CD8-positive, alpha-beta T cell (primary cell): ENCODE measurements at regions of chr7 and their contacts with region 1.

Region 1: DNA sequence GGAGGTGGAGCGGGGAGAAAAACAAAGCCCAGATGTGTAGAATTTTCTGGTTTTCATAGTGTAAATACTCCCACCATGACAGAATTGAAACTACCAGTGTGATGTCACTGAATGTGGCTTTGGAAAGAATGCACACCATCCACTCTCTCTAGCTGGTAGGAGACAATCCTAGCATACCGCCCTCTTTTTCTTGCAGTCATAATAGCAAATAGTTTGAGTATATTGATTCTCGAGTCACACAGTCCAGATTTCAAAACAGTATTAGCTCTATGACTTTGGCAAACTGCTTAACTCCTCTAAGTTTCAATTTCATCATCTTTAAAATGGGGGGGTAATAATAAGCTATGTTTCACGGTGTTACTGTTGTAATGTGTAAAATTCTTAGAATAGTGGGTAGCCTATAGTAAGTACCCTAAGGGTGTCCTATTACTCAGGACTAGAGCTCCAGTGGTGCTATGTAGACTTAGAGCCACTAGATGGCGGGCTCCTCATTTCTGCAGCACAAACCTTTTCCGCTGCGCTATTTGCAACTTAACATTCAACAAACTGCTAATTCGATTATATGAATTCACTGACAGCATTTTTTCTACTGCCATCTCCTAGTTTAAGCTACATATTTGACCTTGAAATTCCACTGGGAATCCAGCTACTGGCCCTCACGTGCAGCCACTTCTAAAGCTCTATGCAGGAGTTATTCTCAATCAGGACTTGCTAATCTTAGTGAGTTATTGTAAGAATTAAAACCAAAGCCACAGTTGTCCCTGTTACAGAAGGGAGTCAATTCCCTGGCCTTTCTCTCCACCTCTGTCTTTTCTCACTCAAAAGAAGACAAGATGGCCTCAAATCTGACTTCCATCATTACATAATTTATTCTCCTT is 18.7 kb downstream of the TAS2R40 start:
- DNase-seq: peak; percentile 48 to 86 (median 72)
- ATAC-seq: peak; percentile 99
- H3K4me3 ChIP-seq: no peak overlapping the region
- H3K4me3 Mint-ChIP-seq: no peak overlapping the region
- H3K27ac ChIP-seq: no peak overlapping the region
- H3K27ac Mint-ChIP-seq: no peak overlapping the region
- H3K4me1 ChIP-seq: peaks cover 18% of the 10 kb centered on the region
- H3K4me1 Mint-ChIP-seq: peaks cover 24% of the 10 kb centered on the region
- H3K27me3 ChIP-seq: no peaks in the 10 kb centered on the region
- H3K27me3 Mint-ChIP-seq: peaks cover 4% of the 10 kb centered on the region
- CTCF ChIP-seq: peak; percentile 97

Region 2: GRCh38 chr7:142733271-142733670 is 507.3 kb before region 1 on chr7:
- CTCF ChIA-PET with region 1: no interaction called
- POLR2A ChIA-PET with region 1: no interaction called
- intact Hi-C with region 1: no loop called
- DNase-seq: no peak
- ATAC-seq: no peak
- H3K4me3 ChIP-seq: no peak overlapping the region
- H3K4me3 Mint-ChIP-seq: no peak overlapping the region
- H3K27ac ChIP-seq: no peak overlapping the region
- H3K27ac Mint-ChIP-seq: no peak overlapping the region
- H3K4me1 ChIP-seq: no peaks in the 10 kb centered on the region
- H3K4me1 Mint-ChIP-seq: no peaks in the 10 kb centered on the region
- H3K27me3 ChIP-seq: no peaks in the 10 kb centered on the region
- H3K27me3 Mint-ChIP-seq: no peaks in the 10 kb centered on the region
- CTCF ChIP-seq: no peak

Region 3: DNA sequence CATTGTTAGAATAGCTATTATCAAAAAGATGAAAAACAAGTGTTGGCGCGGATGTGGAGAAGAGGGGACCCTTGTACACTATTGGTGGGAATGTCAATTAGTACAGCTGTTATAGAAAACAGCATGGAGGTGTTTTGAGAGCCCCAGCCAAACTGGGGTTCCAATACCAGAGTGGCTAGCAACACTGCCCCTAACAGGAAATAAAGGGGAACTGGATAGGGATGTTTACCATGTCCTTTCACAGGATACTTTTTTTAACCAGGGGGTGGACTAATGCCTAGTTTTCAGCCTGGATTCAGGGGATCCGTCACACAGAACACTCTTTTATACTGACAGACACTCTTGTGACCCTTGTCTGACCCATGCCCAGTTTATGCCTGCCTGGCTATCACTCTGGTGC is 15.8 kb after region 1 on chr7:
- CTCF ChIA-PET with region 1: interaction called, 45 read pairs
- POLR2A ChIA-PET with region 1: interaction called, 8 read pairs
- intact Hi-C with region 1: no loop called
- DNase-seq: no peak
- ATAC-seq: no peak
- H3K4me3 ChIP-seq: no peak overlapping the region
- H3K4me3 Mint-ChIP-seq: no peak overlapping the region
- H3K27ac ChIP-seq: no peak overlapping the region
- H3K27ac Mint-ChIP-seq: peak overlapping the region; percentile 67
- H3K4me1 ChIP-seq: peaks cover 30% of the 10 kb centered on the region
- H3K4me1 Mint-ChIP-seq: peaks cover 63% of the 10 kb centered on the region
- H3K27me3 ChIP-seq: no peaks in the 10 kb centered on the region
- H3K27me3 Mint-ChIP-seq: no peaks in the 10 kb centered on the region
- CTCF ChIP-seq: no peak

Region 4: GRCh38 chr7:143279186-143280098 is 38.9 kb after region 1 on chr7:
- CTCF ChIA-PET with region 1: interaction called, 26 read pairs
- POLR2A ChIA-PET with region 1: interaction called, 4 read pairs
- intact Hi-C with region 1: no loop called
- DNase-seq: peak in 2 of 9 experiments; percentile 43 to 64
- ATAC-seq: peak; percentile 63
- H3K4me3 ChIP-seq: peak overlapping the region in 1 of 2 experiments; percentile 4
- H3K4me3 Mint-ChIP-seq: peak overlapping the region; percentile 70
- H3K27ac ChIP-seq: peak overlapping the region; percentile 4 to 54
- H3K27ac Mint-ChIP-seq: peak overlapping the region; percentile 82
- H3K4me1 ChIP-seq: peaks cover 24% of the 10 kb centered on the region
- H3K4me1 Mint-ChIP-seq: peaks cover 34% of the 10 kb centered on the region
- H3K27me3 ChIP-seq: no peaks in the 10 kb centered on the region
- H3K27me3 Mint-ChIP-seq: no peaks in the 10 kb centered on the region
- CTCF ChIP-seq: no peak

Region 5: GRCh38 chr7:143305423-143306070 is 65.0 kb after region 1 on chr7:
- CTCF ChIA-PET with region 1: interaction called, 180 read pairs
- POLR2A ChIA-PET with region 1: interaction called, 6 read pairs
- intact Hi-C with region 1: loop called (anchors 1 kb)
- DNase-seq: peak; percentile 38 to 78 (median 71)
- ATAC-seq: peak; percentile 77
- H3K4me3 ChIP-seq: no peak overlapping the region
- H3K4me3 Mint-ChIP-seq: no peak overlapping the region
- H3K27ac ChIP-seq: no peak overlapping the region
- H3K27ac Mint-ChIP-seq: peak overlapping the region; percentile 39
- H3K4me1 ChIP-seq: peaks cover 3% of the 10 kb centered on the region
- H3K4me1 Mint-ChIP-seq: peaks cover 22% of the 10 kb centered on the region
- H3K27me3 ChIP-seq: no peaks in the 10 kb centered on the region
- H3K27me3 Mint-ChIP-seq: no peaks in the 10 kb centered on the region
- CTCF ChIP-seq: peak; percentile 58

Region 6: DNA sequence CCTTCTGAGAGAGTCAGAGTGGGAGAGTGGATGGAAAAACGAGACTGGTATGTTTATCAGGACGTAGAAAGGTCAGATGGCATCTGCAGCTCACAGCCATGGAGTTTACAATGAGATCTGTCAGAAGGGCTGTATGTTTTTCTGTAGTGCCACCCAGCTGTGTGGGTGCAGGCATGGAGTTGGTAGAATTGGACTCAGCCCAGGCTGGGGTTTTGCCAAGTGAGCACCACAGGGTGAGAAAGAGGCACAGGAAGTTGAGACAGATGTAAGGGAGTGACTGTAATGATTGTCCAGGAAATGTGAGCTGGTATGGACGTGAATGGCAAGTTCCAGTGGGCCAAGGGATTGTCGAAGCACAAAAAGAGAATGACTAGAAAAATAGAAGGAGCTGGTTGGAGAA is 131.5 kb after region 1 on chr7:
- CTCF ChIA-PET with region 1: interaction called, 36 read pairs
- POLR2A ChIA-PET with region 1: interaction called, 3 read pairs
- intact Hi-C with region 1: loop called (anchors 5 to 10 kb)
- DNase-seq: peak; percentile 36 to 81 (median 71)
- ATAC-seq: peak; percentile 33
- H3K4me3 ChIP-seq: no peak overlapping the region
- H3K4me3 Mint-ChIP-seq: peak overlapping the region; percentile 24
- H3K27ac ChIP-seq: peak overlapping the region in 1 of 2 experiments; percentile 36
- H3K27ac Mint-ChIP-seq: peak overlapping the region; percentile 75
- H3K4me1 ChIP-seq: peaks cover 58% of the 10 kb centered on the region
- H3K4me1 Mint-ChIP-seq: peaks cover 55% of the 10 kb centered on the region
- H3K27me3 ChIP-seq: no peaks in the 10 kb centered on the region
- H3K27me3 Mint-ChIP-seq: no peaks in the 10 kb centered on the region
- CTCF ChIP-seq: peak; percentile 18

Region 7: GRCh38 chr7:143408686-143409561 is 168.4 kb after region 1 on chr7 and contains the start of gene EPHA1:
- CTCF ChIA-PET with region 1: interaction called, 68 read pairs
- POLR2A ChIA-PET with region 1: interaction called, 3 read pairs
- intact Hi-C with region 1: loop called (anchors 2 kb)
- DNase-seq: peak; percentile 14 to 77 (median 52)
- ATAC-seq: peak; percentile 71
- H3K4me3 ChIP-seq: peak within 1 kb of the TSS; percentile 56 to 58
- H3K4me3 Mint-ChIP-seq: peak within 1 kb of the TSS; percentile 95
- H3K27ac ChIP-seq: peak within 1 kb of the TSS; percentile 22 to 38
- H3K27ac Mint-ChIP-seq: peak within 1 kb of the TSS; percentile 91
- H3K4me1 ChIP-seq: peaks cover 48% of the 10 kb centered on the region
- H3K4me1 Mint-ChIP-seq: peaks cover 57% of the 10 kb centered on the region
- H3K27me3 ChIP-seq: peaks cover 0 to 2% of the 10 kb centered on the region in 2 experiments
- H3K27me3 Mint-ChIP-seq: no peaks in the 10 kb centered on the region
- CTCF ChIP-seq: no peak
- total RNA-seq, gene EPHA1: 8.3 to 13.1 TPM

Region 8: DNA sequence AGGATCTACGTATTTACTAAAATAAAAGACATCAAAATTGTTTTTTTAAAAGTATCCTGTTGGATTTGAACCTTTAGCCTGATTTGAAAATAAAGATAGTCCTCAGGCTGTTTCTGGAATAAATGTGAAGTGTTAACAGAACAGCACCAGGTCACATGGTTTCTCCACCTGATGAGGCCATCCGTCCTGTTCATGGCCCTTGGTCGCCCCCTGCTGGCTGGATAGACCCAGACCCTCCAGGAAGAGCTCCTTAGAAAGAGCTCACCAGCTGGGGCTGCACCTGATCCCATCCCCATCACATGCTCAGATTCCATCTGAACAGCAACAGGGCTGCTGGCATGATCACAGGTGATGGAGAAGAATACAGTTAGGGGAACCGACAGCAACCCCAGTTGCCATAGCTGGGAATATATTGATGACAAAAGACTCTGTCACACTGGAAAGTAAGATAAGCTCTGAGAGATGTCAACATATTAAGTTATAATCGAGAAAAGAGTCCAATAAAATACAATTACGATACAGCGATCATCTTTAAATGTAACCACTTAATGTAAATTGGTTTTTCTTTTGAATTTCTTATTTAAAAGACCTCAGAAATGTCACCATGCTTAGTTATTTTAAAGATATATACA is 887.3 kb after region 1 on chr7:
- CTCF ChIA-PET with region 1: no interaction called
- POLR2A ChIA-PET with region 1: no interaction called
- intact Hi-C with region 1: loop called in 1 of 2 experiments (anchors 10 kb)
- DNase-seq: peak; percentile 69 to 90 (median 84)
- ATAC-seq: peak; percentile 98
- H3K4me3 ChIP-seq: no peak overlapping the region
- H3K4me3 Mint-ChIP-seq: no peak overlapping the region
- H3K27ac ChIP-seq: no peak overlapping the region
- H3K27ac Mint-ChIP-seq: no peak overlapping the region
- H3K4me1 ChIP-seq: no peaks in the 10 kb centered on the region
- H3K4me1 Mint-ChIP-seq: no peaks in the 10 kb centered on the region
- H3K27me3 ChIP-seq: no peaks in the 10 kb centered on the region
- H3K27me3 Mint-ChIP-seq: no peaks in the 10 kb centered on the region
- CTCF ChIP-seq: peak; percentile 85